IMR-90 (cell line): ENCODE measurements at regions of chr17 and their contacts with region 1.

Region 1: GRCh38 chr17:40818733-40819527 is 3.5 kb downstream of the KRT10 start:
- DNase-seq: peak; percentile 73
- ATAC-seq: peak; percentile 86
- H3K4me3 ChIP-seq: peak overlapping the region; percentile 99
- H3K27ac ChIP-seq: peak overlapping the region; percentile 79
- H3K4me1 ChIP-seq: peaks cover 5% of the 10 kb centered on the region; the same call in 1 of the 2 replicates
- H3K27me3 ChIP-seq: no peaks in the 10 kb centered on the region
- CTCF ChIP-seq: 0 out of 2 replicates have a peak, but pooled peaks have one; percentile 0
- POLR2A ChIP-seq: peak; percentile 68
- RAD21 ChIP-seq: no peak

Region 2: GRCh38 chr17:40104594-40105486 is 714.1 kb before region 1 on chr17:
- CTCF ChIA-PET with region 1: no interaction called
- POLR2A ChIA-PET with region 1: interaction called, 12 read pairs
- dilution Hi-C with region 1: no loop called
- in situ Hi-C with region 1: no loop called
- intact Hi-C with region 1: no loop called
- DNase-seq: no peak
- ATAC-seq: no peak
- H3K4me3 ChIP-seq: no peak overlapping the region
- H3K27ac ChIP-seq: no peak overlapping the region
- H3K4me1 ChIP-seq: peaks cover 41% of the 10 kb centered on the region
- H3K27me3 ChIP-seq: no peaks in the 10 kb centered on the region
- CTCF ChIP-seq: no peak
- POLR2A ChIP-seq: no peak
- RAD21 ChIP-seq: no peak

Region 3: DNA sequence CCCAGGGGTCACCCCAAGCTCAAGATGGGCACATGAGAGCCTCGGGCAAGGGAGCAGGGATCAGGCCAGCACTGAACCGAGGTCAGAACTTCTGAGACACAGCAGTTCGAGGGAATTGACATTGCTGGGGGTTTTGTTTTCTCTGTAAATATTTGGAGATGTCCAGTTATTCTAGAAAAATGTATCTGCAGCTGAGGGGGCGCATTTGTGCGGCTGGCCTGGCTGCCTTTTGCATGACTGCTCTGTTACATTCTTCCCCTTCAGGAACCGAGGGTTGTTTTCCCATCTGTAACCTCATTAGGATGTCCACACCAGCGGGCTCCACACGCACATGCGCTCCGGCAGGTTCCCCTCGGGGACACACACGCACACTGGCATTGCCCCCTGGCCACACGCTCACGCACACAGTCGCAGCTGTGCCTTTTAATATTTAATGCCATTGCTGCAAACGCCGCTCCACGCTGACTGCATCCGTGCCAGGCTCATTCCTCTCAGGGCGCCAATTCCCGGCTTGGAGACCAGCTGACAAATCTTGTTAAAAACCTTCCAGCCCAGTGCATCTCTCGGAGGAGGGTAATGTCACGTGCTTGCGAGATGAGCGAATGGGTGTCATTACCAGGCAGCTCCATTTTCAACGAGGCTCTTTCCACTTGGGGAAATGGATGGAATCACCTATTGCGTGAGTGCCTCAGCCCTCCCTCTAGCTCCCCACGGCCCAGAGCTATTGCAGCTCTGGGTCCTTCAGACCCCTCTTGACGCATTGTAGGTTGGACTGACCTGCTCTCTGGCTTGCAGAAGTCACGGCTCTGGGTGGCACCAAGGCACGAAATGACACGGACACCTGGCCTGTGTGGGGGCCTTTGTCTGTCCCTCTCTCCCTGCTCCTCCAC is 266.8 kb before region 1 on chr17:
- CTCF ChIA-PET with region 1: no interaction called
- POLR2A ChIA-PET with region 1: no interaction called
- dilution Hi-C with region 1: no loop called
- in situ Hi-C with region 1: no loop called
- intact Hi-C with region 1: no loop called
- DNase-seq: peak; percentile 99
- ATAC-seq: peak; percentile 59
- H3K4me3 ChIP-seq: no peak overlapping the region
- H3K27ac ChIP-seq: peak overlapping the region; percentile 93
- H3K4me1 ChIP-seq: peaks cover 60% of the 10 kb centered on the region
- H3K27me3 ChIP-seq: no peaks in the 10 kb centered on the region
- CTCF ChIP-seq: no peak
- POLR2A ChIP-seq: peak; percentile 53
- RAD21 ChIP-seq: 0 out of 2 replicates have a peak, but pooled peaks have one; percentile 2